MCF 10A (cell line): ENCODE measurements at regions of chr18 and their contacts with region 1.

Region 1: DNA sequence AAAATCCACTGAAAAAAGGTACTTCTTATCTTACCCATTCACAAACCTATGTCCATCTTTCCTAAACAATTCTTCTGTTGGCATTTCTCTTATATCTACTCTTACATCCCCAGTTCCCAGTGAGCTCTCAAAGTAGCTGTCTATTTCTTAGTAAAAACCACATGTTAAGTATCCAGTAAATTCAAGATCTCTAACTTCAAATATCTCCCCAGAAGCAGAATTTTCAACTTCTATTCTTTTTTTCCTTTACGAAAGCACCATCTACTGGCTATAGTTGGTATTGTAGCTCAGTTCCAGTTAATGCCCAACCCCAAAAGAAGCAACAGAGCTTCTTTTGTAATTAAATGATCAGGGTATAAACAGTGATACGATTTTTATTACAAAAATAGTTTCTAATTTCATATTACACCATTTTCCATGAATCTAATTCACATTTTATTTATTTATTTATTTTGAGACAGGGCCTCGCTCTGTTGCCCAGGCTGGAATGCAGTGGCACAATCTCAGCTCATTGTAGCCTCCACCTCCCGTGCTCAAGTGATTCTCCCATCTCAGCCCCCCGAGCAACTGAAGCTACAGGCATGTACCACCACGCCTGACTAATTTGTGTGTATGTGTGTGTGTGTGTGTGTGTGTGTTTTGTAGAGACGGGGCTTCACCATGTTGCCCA is 28.5 kb downstream of the HRH4 start:
- DNase-seq: peak; percentile 52
- H3K4me3 Mint-ChIP-seq: no peak overlapping the region
- H3K27ac Mint-ChIP-seq: no peak overlapping the region
- H3K4me1 Mint-ChIP-seq: peaks cover 9% of the 10 kb centered on the region
- H3K27me3 Mint-ChIP-seq: no peaks in the 10 kb centered on the region
- CTCF ChIP-seq: peak; percentile 59

Region 2: GRCh38 chr18:24362758-24363157 is 126.2 kb before region 1 on chr18:
- CTCF ChIA-PET with region 1: interaction called, 285 read pairs
- POLR2A ChIA-PET with region 1: interaction called, 4 read pairs
- intact Hi-C with region 1: loop called (anchors 1 kb)
- DNase-seq: no peak
- H3K4me3 Mint-ChIP-seq: no peak overlapping the region
- H3K27ac Mint-ChIP-seq: no peak overlapping the region
- H3K4me1 Mint-ChIP-seq: no peaks in the 10 kb centered on the region
- H3K27me3 Mint-ChIP-seq: no peaks in the 10 kb centered on the region
- CTCF ChIP-seq: no peak

Region 3: DNA sequence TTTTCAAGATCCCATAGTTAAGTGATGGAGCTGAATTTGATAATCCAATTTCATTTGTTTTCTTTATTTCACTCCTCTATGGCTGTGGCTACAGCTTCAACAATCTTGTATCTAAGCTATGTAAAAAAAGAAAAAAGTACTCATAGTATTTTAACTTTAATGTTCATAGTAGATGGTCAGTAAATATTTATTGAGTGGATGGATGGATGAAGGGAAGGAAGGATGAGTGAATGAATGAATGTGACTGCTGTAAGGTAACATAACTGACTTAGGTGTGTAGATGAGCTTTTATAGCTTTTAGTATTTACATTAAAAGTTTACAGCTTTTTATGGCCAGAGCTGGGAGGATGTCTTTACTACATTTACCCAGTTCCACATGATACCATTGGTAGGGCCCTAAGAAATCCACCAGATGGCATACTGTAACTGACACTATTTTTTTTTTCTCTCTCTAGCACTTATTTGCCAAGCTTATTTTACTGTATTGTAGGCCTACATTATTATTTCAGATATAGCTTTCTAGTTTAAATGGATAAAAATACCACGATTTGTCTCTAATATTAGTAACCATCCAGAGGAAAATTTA is 41.9 kb before region 1 on chr18:
- CTCF ChIA-PET with region 1: interaction called, 15 read pairs
- POLR2A ChIA-PET with region 1: interaction called, 3 read pairs
- intact Hi-C with region 1: loop called (anchors 5 kb)
- DNase-seq: no peak
- H3K4me3 Mint-ChIP-seq: no peak overlapping the region
- H3K27ac Mint-ChIP-seq: no peak overlapping the region
- H3K4me1 Mint-ChIP-seq: no peaks in the 10 kb centered on the region
- H3K27me3 Mint-ChIP-seq: no peaks in the 10 kb centered on the region
- CTCF ChIP-seq: no peak

Region 4: DNA sequence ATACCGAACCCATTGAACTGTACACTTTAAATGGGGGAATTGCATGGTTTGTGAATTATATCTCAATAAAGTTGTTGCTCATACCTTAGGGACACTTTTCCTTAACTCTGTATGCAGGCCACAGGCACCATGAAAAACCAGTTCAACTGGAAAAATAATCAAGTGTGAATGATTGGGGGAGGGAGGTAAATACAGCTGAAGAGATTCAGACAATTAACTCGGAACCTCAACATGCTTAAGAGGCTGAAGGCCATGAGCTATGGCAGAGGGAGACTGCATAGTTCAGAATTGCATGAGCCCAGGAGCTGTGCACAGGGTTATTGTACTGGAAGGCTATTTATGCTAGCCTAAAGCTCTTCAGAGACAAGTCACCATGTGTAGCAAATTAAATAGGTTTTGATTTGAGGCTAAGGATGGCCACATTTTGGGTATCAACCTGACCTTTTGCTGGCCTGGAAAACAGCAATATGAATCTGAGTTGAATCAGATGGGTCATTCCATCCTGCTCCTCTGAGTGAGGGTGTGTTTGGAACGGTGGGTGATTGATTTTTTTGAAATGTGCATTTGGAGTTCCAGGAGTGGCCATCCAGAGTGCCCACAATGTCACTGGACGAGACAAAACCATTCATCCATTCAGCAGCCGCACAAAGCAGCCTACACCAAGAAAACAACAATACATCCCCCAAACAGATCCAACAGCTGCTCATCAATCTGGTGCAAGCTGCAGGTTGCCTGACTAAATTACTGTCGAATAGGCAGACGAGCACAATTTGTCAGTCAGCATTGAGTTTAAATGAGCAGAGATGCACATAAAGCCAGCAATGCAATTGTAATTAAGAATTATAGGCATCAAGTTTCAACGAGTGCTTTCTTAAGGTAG is 13.9 kb after region 1 on chr18:
- CTCF ChIA-PET with region 1: interaction called, 45 read pairs
- POLR2A ChIA-PET with region 1: no interaction called
- intact Hi-C with region 1: no loop called
- DNase-seq: no peak
- H3K4me3 Mint-ChIP-seq: no peak overlapping the region
- H3K27ac Mint-ChIP-seq: no peak overlapping the region
- H3K4me1 Mint-ChIP-seq: no peaks in the 10 kb centered on the region
- H3K27me3 Mint-ChIP-seq: no peaks in the 10 kb centered on the region
- CTCF ChIP-seq: no peak

Region 5: DNA sequence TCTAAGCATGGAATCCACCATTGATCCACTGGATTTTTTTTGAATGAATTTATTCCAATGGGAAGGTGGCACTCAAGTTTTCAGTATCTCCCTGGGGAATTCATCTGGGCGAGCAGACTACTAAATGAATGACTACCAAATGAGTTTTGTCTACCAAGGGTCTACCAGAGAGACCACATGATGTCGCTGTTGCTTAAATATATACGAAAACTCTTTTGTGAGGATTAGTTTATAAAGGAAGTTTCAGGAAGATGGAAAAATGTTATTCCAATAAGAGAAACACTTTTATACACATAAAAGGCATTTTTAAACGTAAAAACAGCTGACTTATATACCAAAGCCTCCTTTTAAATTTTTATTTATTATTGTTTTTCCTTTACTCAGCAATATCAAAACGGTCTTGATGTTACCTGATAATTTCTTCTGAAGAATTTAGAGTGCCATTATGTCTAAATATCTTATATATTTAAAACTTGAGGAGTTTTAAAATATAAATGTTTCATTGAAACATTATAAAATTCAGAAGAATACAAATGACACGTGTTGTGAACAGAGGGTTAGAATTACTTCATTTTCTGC is 111.2 kb after region 1 on chr18:
- CTCF ChIA-PET with region 1: no interaction called
- POLR2A ChIA-PET with region 1: no interaction called
- intact Hi-C with region 1: loop called (anchors 10 kb)
- DNase-seq: peak; percentile 65
- H3K4me3 Mint-ChIP-seq: no peak overlapping the region
- H3K27ac Mint-ChIP-seq: no peak overlapping the region
- H3K4me1 Mint-ChIP-seq: no peaks in the 10 kb centered on the region
- H3K27me3 Mint-ChIP-seq: peaks cover 37% of the 10 kb centered on the region
- CTCF ChIP-seq: peak; percentile 58

Region 6: GRCh38 chr18:24656551-24657443 is 167.8 kb after region 1 on chr18:
- CTCF ChIA-PET with region 1: no interaction called
- POLR2A ChIA-PET with region 1: no interaction called
- intact Hi-C with region 1: no loop called
- DNase-seq: peak; percentile 41
- H3K4me3 Mint-ChIP-seq: no peak overlapping the region
- H3K27ac Mint-ChIP-seq: no peak overlapping the region
- H3K4me1 Mint-ChIP-seq: no peaks in the 10 kb centered on the region
- H3K27me3 Mint-ChIP-seq: no peaks in the 10 kb centered on the region
- CTCF ChIP-seq: no peak